ENCODE measurements at regions of chr9 and their contacts with region 1.

Region 1: GRCh38 chr9:71716138-71716909 is 52.0 kb downstream of the CEMIP2 start:
- DNase-seq: no peak
- ATAC-seq: no peak
- H3K4me3 ChIP-seq: no peak overlapping the region
- H3K4me3 Mint-ChIP-seq: no peak overlapping the region
- H3K27ac ChIP-seq: no peak overlapping the region
- H3K27ac Mint-ChIP-seq: no peak overlapping the region
- H3K4me1 ChIP-seq: no peaks in the 10 kb centered on the region
- H3K4me1 Mint-ChIP-seq: peaks cover 6 to 13% (median 7%) of the 10 kb centered on the region in 3 donors
- H3K27me3 ChIP-seq: no peaks in the 10 kb centered on the region
- H3K27me3 Mint-ChIP-seq: no peaks in the 10 kb centered on the region

Region 2: GRCh38 chr9:71604197-71605063 is 111.9 kb before region 1 on chr9:
- CTCF ChIA-PET with region 1: interaction called, 7 to 22 read pairs
- POLR2A ChIA-PET with region 1: no interaction called
- DNase-seq: peak; percentile 51 to 83 (median 75)
- ATAC-seq: peak; percentile 73 to 86 (median 75)
- H3K4me3 ChIP-seq: no peak overlapping the region
- H3K4me3 Mint-ChIP-seq: no peak overlapping the region
- H3K27ac ChIP-seq: no peak overlapping the region
- H3K27ac Mint-ChIP-seq: no peak overlapping the region
- H3K4me1 ChIP-seq: no peaks in the 10 kb centered on the region
- H3K4me1 Mint-ChIP-seq: no peaks in the 10 kb centered on the region
- H3K27me3 ChIP-seq: no peaks in the 10 kb centered on the region
- H3K27me3 Mint-ChIP-seq: no peaks in the 10 kb centered on the region

Region 3: GRCh38 chr9:71677209-71677608 is 39.1 kb before region 1 on chr9:
- CTCF ChIA-PET with region 1: no interaction called
- POLR2A ChIA-PET with region 1: interaction called in 1 of 2 experiments, 11 read pairs
- DNase-seq: no peak
- ATAC-seq: no peak
- H3K4me3 ChIP-seq: no peak overlapping the region
- H3K4me3 Mint-ChIP-seq: no peak overlapping the region
- H3K27ac ChIP-seq: no peak overlapping the region
- H3K27ac Mint-ChIP-seq: no peak overlapping the region
- H3K4me1 ChIP-seq: no peaks in the 10 kb centered on the region
- H3K4me1 Mint-ChIP-seq: peaks cover 12 to 33% (median 23%) of the 10 kb centered on the region in 3 donors
- H3K27me3 ChIP-seq: no peaks in the 10 kb centered on the region
- H3K27me3 Mint-ChIP-seq: no peaks in the 10 kb centered on the region

Region 4: GRCh38 chr9:71683598-71684235 is 32.6 kb before region 1 on chr9:
- CTCF ChIA-PET with region 1: interaction called, 4 to 29 read pairs
- POLR2A ChIA-PET with region 1: interaction called, 7 to 9 read pairs
- DNase-seq: peak in 2 of 35 experiments; percentile 2 to 14
- ATAC-seq: no peak
- H3K4me3 ChIP-seq: no peak overlapping the region
- H3K4me3 Mint-ChIP-seq: peak overlapping the region in 1 of 3 donors; percentile 17
- H3K27ac ChIP-seq: no peak overlapping the region
- H3K27ac Mint-ChIP-seq: peak overlapping the region; percentile 23 to 71
- H3K4me1 ChIP-seq: peaks cover 31 to 41% of the 10 kb centered on the region in 2 experiments
- H3K4me1 Mint-ChIP-seq: peaks cover 53 to 68% (median 66%) of the 10 kb centered on the region in 3 donors
- H3K27me3 ChIP-seq: no peaks in the 10 kb centered on the region
- H3K27me3 Mint-ChIP-seq: no peaks in the 10 kb centered on the region

Region 5: GRCh38 chr9:71703172-71703872 is 13.0 kb before region 1 on chr9:
- CTCF ChIA-PET with region 1: interaction called in 1 of 2 experiments, 10 read pairs
- POLR2A ChIA-PET with region 1: interaction called, 3 read pairs
- DNase-seq: no peak
- ATAC-seq: no peak
- H3K4me3 ChIP-seq: no peak overlapping the region
- H3K4me3 Mint-ChIP-seq: no peak overlapping the region
- H3K27ac ChIP-seq: no peak overlapping the region
- H3K27ac Mint-ChIP-seq: peak overlapping the region; percentile 36 to 56
- H3K4me1 ChIP-seq: no peaks in the 10 kb centered on the region
- H3K4me1 Mint-ChIP-seq: peaks cover 0 to 5% (median 0%) of the 10 kb centered on the region in 3 donors
- H3K27me3 ChIP-seq: no peaks in the 10 kb centered on the region
- H3K27me3 Mint-ChIP-seq: no peaks in the 10 kb centered on the region

Measured in T-cell (primary cell).